ENCODE measurements at regions of chr7 and their contacts with region 1.

Region 1: DNA sequence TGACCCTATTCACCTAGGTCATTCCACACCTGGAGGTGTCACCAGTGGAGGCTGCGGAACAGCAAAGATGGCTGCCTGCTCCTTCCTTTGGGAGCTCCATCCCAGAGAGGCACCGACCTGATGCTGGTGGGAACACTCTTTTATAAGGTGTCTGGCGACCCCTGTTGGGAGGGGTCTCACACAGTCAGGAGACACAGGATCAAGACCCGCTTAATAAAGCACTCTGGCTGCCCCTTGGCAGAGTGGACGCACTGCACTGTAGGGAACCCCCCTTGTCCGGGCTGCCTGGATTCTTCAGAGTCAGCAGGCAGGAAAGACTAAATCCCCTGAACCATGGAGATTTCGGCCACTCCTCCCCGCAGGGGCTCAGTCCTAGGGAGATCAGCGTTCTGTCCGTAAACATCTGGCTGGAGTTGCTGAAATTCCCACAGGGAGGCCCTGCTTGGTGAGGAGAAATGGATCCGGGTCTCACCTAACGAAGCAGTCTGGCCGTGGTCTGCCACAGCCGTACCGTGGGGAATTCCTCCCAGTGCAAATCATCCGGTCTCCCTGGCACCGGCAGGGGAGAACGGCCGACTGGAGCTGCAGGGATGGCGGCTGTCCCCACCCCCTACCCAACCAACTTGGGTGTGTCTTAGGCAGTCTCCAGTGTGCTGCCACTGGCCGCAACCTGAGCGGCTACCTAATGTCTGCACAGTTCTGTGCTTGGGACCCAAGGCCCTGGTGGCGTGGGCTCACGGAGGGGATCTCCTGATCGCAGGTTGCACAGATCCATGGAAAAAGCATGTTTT is 66.1 kb downstream of the LSMEM1 start:
- DNase-seq: peak in 1 of 4 donors; percentile 9
- ATAC-seq: no peak
- H3K4me3 ChIP-seq: no peak overlapping the region
- H3K27ac ChIP-seq: no peak overlapping the region
- H3K4me1 ChIP-seq: no peaks in the 10 kb centered on the region
- H3K27me3 ChIP-seq: no peaks in the 10 kb centered on the region
- CTCF ChIP-seq: no peak
- POLR2A ChIP-seq: no peak

Region 2: GRCh38 chr7:112192236-112193154 is 354.4 kb before region 1 on chr7:
- intact Hi-C with region 1: no loop called
- DNase-seq: no peak
- ATAC-seq: peak; percentile 45
- H3K4me3 ChIP-seq: no peak overlapping the region
- H3K27ac ChIP-seq: no peak overlapping the region
- H3K4me1 ChIP-seq: no peaks in the 10 kb centered on the region
- H3K27me3 ChIP-seq: no peaks in the 10 kb centered on the region
- CTCF ChIP-seq: no peak
- POLR2A ChIP-seq: no peak

Region 3: GRCh38 chr7:112596260-112596659 is 49.3 kb after region 1 on chr7:
- intact Hi-C with region 1: no loop called
- DNase-seq: no peak
- ATAC-seq: peak; percentile 30
- H3K4me3 ChIP-seq: no peak overlapping the region
- H3K27ac ChIP-seq: no peak overlapping the region
- H3K4me1 ChIP-seq: no peaks in the 10 kb centered on the region
- H3K27me3 ChIP-seq: no peaks in the 10 kb centered on the region
- CTCF ChIP-seq: no peak
- POLR2A ChIP-seq: no peak

Region 4: GRCh38 chr7:113705439-113705838 is 1158.5 kb after region 1 on chr7:
- intact Hi-C with region 1: loop called (anchors 10 kb)
- DNase-seq: no peak
- ATAC-seq: no peak
- H3K4me3 ChIP-seq: no peak overlapping the region
- H3K27ac ChIP-seq: no peak overlapping the region
- H3K4me1 ChIP-seq: no peaks in the 10 kb centered on the region
- H3K27me3 ChIP-seq: no peaks in the 10 kb centered on the region
- CTCF ChIP-seq: no peak
- POLR2A ChIP-seq: no peak

Measured in body of pancreas (tissue), 4 donors.